CD8-positive, alpha-beta T cell (primary cell): ENCODE measurements at regions of chr10 and their contacts with region 1.

Region 1: GRCh38 chr10:123132576-123133477 is 2.9 kb upstream of the HMX3 start:
- DNase-seq: peak; percentile 73 to 91 (median 87)
- ATAC-seq: peak; percentile 62
- H3K4me3 ChIP-seq: peak overlapping the region in 1 of 2 experiments; percentile 16
- H3K4me3 Mint-ChIP-seq: peak overlapping the region; percentile 69
- H3K27ac ChIP-seq: no peak overlapping the region
- H3K27ac Mint-ChIP-seq: no peak overlapping the region
- H3K4me1 ChIP-seq: peaks cover 44% of the 10 kb centered on the region
- H3K4me1 Mint-ChIP-seq: peaks cover 33% of the 10 kb centered on the region
- H3K27me3 ChIP-seq: peaks cover 40 to 44% of the 10 kb centered on the region in 2 experiments
- H3K27me3 Mint-ChIP-seq: peaks cover 62% of the 10 kb centered on the region
- CTCF ChIP-seq: peak; percentile 95

Region 2: GRCh38 chr10:122648599-122649428 is 484.0 kb before region 1 on chr10:
- CTCF ChIA-PET with region 1: no interaction called
- POLR2A ChIA-PET with region 1: no interaction called
- intact Hi-C with region 1: loop called in 1 of 2 experiments (anchors 5 kb)
- DNase-seq: peak in 2 of 9 experiments; percentile 14 to 19
- ATAC-seq: no peak
- H3K4me3 ChIP-seq: no peak overlapping the region
- H3K4me3 Mint-ChIP-seq: no peak overlapping the region
- H3K27ac ChIP-seq: no peak overlapping the region
- H3K27ac Mint-ChIP-seq: no peak overlapping the region
- H3K4me1 ChIP-seq: no peaks in the 10 kb centered on the region
- H3K4me1 Mint-ChIP-seq: no peaks in the 10 kb centered on the region
- H3K27me3 ChIP-seq: no peaks in the 10 kb centered on the region
- H3K27me3 Mint-ChIP-seq: peaks cover 16% of the 10 kb centered on the region
- CTCF ChIP-seq: peak; percentile 35

Region 3: DNA sequence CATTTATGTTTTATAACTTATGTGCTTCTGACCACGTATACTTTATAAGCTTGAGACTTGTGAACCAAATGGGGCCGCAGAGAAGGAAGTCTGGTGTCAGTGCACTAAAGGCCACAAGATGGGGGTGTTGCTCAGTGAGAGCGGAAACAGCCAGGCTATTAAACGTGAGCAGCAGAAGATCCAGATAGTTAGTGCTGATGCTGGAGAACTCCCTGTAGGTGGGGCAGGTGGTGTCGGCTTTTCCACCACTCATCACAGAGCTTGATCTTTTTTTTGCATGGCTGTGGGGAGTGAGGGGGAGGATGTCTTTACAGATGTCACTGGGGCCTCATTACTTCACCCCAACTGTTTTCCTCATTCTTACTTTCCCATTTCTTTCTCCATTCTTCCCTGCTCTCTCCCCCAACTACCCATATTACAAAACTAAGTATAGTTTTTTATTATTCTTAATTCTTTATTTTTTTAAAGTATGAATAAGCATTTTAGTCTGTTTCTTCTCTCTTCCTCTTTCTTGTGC is 89.4 kb before region 1 on chr10:
- CTCF ChIA-PET with region 1: interaction called, 7 read pairs
- POLR2A ChIA-PET with region 1: no interaction called
- intact Hi-C with region 1: loop called (anchors 1 kb)
- DNase-seq: peak in 8 of 9 experiments; percentile 11 to 66 (median 42)
- ATAC-seq: peak; percentile 75
- H3K4me3 ChIP-seq: no peak overlapping the region
- H3K4me3 Mint-ChIP-seq: no peak overlapping the region
- H3K27ac ChIP-seq: no peak overlapping the region
- H3K27ac Mint-ChIP-seq: no peak overlapping the region
- H3K4me1 ChIP-seq: no peaks in the 10 kb centered on the region
- H3K4me1 Mint-ChIP-seq: peaks cover 7% of the 10 kb centered on the region
- H3K27me3 ChIP-seq: no peaks in the 10 kb centered on the region
- H3K27me3 Mint-ChIP-seq: no peaks in the 10 kb centered on the region
- CTCF ChIP-seq: peak; percentile 68

Region 4: GRCh38 chr10:123272171-123272570 is 139.3 kb after region 1 on chr10:
- CTCF ChIA-PET with region 1: interaction called, 10 read pairs
- POLR2A ChIA-PET with region 1: no interaction called
- intact Hi-C with region 1: loop called (anchors 1 to 2 kb)
- DNase-seq: peak in 1 of 9 experiments; percentile 18
- ATAC-seq: no peak
- H3K4me3 ChIP-seq: no peak overlapping the region
- H3K4me3 Mint-ChIP-seq: no peak overlapping the region
- H3K27ac ChIP-seq: no peak overlapping the region
- H3K27ac Mint-ChIP-seq: no peak overlapping the region
- H3K4me1 ChIP-seq: no peaks in the 10 kb centered on the region
- H3K4me1 Mint-ChIP-seq: peaks cover 9% of the 10 kb centered on the region
- H3K27me3 ChIP-seq: no peaks in the 10 kb centered on the region
- H3K27me3 Mint-ChIP-seq: peaks cover 29% of the 10 kb centered on the region
- CTCF ChIP-seq: peak; percentile 35

Region 5: DNA sequence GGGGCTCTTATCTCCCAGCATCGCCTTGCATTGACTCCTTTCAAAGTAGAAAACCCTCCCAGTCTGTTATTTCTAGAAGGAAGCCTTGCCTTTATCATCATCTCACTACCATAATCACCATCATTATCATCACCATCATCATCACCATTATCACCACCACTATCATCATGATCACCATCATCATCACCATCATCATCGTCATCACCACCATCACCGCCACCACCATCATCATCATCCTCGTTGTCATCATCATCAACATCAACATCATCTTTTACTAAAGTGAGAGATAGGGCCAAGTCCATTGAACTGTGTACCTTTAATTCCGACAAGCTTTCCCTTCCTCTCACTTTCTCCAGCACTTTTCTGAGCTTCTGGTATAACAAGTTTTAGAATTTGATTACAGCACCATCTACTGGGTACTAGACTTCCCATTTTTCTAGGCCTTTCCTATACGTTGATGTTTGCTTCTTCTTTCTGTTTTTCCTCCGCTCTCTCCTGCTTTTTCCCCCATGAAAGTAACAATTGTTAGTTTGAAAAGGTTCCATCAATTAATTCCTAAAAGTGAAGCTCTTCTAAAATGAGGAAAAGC is 247.8 kb after region 1 on chr10:
- CTCF ChIA-PET with region 1: interaction called, 36 read pairs
- POLR2A ChIA-PET with region 1: interaction called, 4 read pairs
- intact Hi-C with region 1: loop called (anchors 1 kb)
- DNase-seq: peak in 2 of 9 experiments; percentile 11 to 20
- ATAC-seq: no peak
- H3K4me3 ChIP-seq: no peak overlapping the region
- H3K4me3 Mint-ChIP-seq: no peak overlapping the region
- H3K27ac ChIP-seq: no peak overlapping the region
- H3K27ac Mint-ChIP-seq: no peak overlapping the region
- H3K4me1 ChIP-seq: no peaks in the 10 kb centered on the region
- H3K4me1 Mint-ChIP-seq: no peaks in the 10 kb centered on the region
- H3K27me3 ChIP-seq: no peaks in the 10 kb centered on the region
- H3K27me3 Mint-ChIP-seq: peaks cover 13% of the 10 kb centered on the region
- CTCF ChIP-seq: peak; percentile 42

Region 6: GRCh38 chr10:123559066-123559822 is 426.4 kb after region 1 on chr10:
- CTCF ChIA-PET with region 1: interaction called, 12 read pairs
- POLR2A ChIA-PET with region 1: no interaction called
- intact Hi-C with region 1: loop called (anchors 1 kb)
- DNase-seq: peak; percentile 48 to 82 (median 67)
- ATAC-seq: peak; percentile 68
- H3K4me3 ChIP-seq: no peak overlapping the region
- H3K4me3 Mint-ChIP-seq: no peak overlapping the region
- H3K27ac ChIP-seq: no peak overlapping the region
- H3K27ac Mint-ChIP-seq: no peak overlapping the region
- H3K4me1 ChIP-seq: no peaks in the 10 kb centered on the region
- H3K4me1 Mint-ChIP-seq: no peaks in the 10 kb centered on the region
- H3K27me3 ChIP-seq: no peaks in the 10 kb centered on the region
- H3K27me3 Mint-ChIP-seq: peaks cover 15% of the 10 kb centered on the region
- CTCF ChIP-seq: peak; percentile 95